ENCODE measurements at regions of chrX and their contacts with region 1.

Region 1: GRCh38 chrX:77875372-77875771 is 19.9 kb downstream of the MAGT1 start:
- DNase-seq: no peak
- H3K4me3 Mint-ChIP-seq: no peak overlapping the region
- H3K27ac Mint-ChIP-seq: no peak overlapping the region
- H3K4me1 Mint-ChIP-seq: no peaks in the 10 kb centered on the region
- H3K27me3 Mint-ChIP-seq: no peaks in the 10 kb centered on the region
- CTCF ChIP-seq: no peak

Region 2: GRCh38 chrX:77622233-77622632 is 253.1 kb before region 1 on chrX:
- CTCF ChIA-PET with region 1: no interaction called
- intact Hi-C with region 1: no loop called
- DNase-seq: no peak
- H3K4me3 Mint-ChIP-seq: no peak overlapping the region
- H3K27ac Mint-ChIP-seq: no peak overlapping the region
- H3K4me1 Mint-ChIP-seq: no peaks in the 10 kb centered on the region
- H3K27me3 Mint-ChIP-seq: no peaks in the 10 kb centered on the region
- CTCF ChIP-seq: no peak

Region 3: DNA sequence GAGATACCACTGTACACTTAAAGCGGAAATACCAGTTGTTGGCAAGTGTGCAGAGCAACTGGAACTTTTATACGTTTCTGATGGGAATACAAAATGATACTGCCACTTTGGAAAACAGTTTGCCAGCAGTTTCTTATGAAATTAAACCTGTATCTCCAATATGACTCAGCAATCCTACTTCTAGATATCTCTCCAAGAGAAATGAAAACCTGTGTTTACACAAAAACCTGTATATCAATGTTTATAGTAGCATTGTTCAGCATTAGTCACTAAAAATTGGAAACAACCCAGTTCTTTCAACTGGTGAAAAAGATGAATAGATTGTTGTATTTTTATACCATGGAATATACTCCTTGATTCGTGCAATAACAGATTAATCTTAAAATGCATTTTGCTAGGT is 61.9 kb after region 1 on chrX:
- CTCF ChIA-PET with region 1: no interaction called
- intact Hi-C with region 1: no loop called
- DNase-seq: no peak
- H3K4me3 Mint-ChIP-seq: peak overlapping the region; percentile 37
- H3K27ac Mint-ChIP-seq: peak overlapping the region; percentile 71
- H3K4me1 Mint-ChIP-seq: peaks cover 19% of the 10 kb centered on the region
- H3K27me3 Mint-ChIP-seq: no peaks in the 10 kb centered on the region
- CTCF ChIP-seq: no peak

Region 4: DNA sequence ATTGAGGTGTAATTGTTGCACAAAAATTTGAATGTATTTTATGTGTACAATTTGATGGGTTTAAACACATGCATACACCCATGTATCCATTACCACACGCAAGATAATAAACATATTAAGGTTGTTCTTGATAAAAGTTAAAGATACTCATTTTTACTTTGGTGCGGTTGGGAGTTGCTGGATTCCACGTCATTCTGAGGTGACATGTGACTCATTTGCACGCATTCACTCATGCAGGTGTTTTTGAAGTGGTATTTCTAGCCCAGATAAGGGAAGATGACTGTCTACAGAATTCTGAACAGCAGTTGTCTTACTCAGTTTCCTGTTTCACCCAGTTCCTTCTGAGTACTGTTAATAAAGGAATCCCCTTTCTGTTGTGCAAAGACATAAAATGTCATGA is 641.8 kb after region 1 on chrX:
- CTCF ChIA-PET with region 1: interaction called, 10 read pairs
- intact Hi-C with region 1: no loop called
- DNase-seq: no peak
- H3K4me3 Mint-ChIP-seq: no peak overlapping the region
- H3K27ac Mint-ChIP-seq: no peak overlapping the region
- H3K4me1 Mint-ChIP-seq: no peaks in the 10 kb centered on the region
- H3K27me3 Mint-ChIP-seq: no peaks in the 10 kb centered on the region
- CTCF ChIP-seq: no peak